ENCODE measurements at regions of chr17 and their contacts with region 1.

Region 1: GRCh38 chr17:61412143-61412859 is 12.7 kb downstream of the TBX2 start:
- DNase-seq: peak; percentile 75
- ATAC-seq: peak; percentile 44
- H3K4me3 ChIP-seq: peak overlapping the region; percentile 66
- H3K27ac ChIP-seq: peak overlapping the region; percentile 91
- H3K4me1 ChIP-seq: peaks cover 40% of the 10 kb centered on the region
- H3K27me3 ChIP-seq: no peaks in the 10 kb centered on the region
- CTCF ChIP-seq: peak; percentile 98
- POLR2A ChIP-seq: peak; percentile 63
- RAD21 ChIP-seq: peak; percentile 98

Region 2: GRCh38 chr17:61389670-61390478 is 22.4 kb before region 1 on chr17:
- CTCF ChIA-PET with region 1: no interaction called
- POLR2A ChIA-PET with region 1: no interaction called
- dilution Hi-C with region 1: no loop called
- in situ Hi-C with region 1: no loop called
- intact Hi-C with region 1: no loop called
- DNase-seq: peak; percentile 41
- ATAC-seq: peak; percentile 72
- H3K4me3 ChIP-seq: no peak overlapping the region
- H3K27ac ChIP-seq: peak overlapping the region; percentile 9; the same call in 1 of the 2 replicates
- H3K4me1 ChIP-seq: peaks cover 19% of the 10 kb centered on the region
- H3K27me3 ChIP-seq: no peaks in the 10 kb centered on the region
- CTCF ChIP-seq: peak; percentile 85
- POLR2A ChIP-seq: no peak
- RAD21 ChIP-seq: peak; percentile 89

Region 3: DNA sequence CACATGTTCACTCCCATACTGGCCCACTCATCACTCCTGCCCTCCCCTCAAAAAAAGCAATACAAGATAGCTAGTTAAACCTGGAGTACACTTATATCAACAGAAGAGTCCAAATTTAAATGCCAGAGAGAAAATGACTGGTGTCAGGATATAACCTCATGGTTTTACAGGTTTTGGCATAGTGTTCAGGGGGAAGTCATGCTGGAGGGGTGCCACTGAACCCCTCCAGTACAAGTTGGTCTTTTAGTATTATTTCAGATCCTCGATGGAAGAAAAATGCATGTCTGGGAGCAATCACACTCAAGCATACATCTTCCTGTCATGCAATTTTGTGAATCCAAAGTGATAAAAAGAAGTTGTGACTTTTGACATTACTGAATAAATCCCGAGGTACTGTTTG is 168.2 kb after region 1 on chr17:
- CTCF ChIA-PET with region 1: interaction called, 3 read pairs
- POLR2A ChIA-PET with region 1: interaction called, 14 read pairs
- dilution Hi-C with region 1: no loop called
- in situ Hi-C with region 1: no loop called
- intact Hi-C with region 1: no loop called
- DNase-seq: no peak
- ATAC-seq: no peak
- H3K4me3 ChIP-seq: no peak overlapping the region
- H3K27ac ChIP-seq: no peak overlapping the region
- H3K4me1 ChIP-seq: peaks cover 7% of the 10 kb centered on the region; the same call in 1 of the 2 replicates
- H3K27me3 ChIP-seq: no peaks in the 10 kb centered on the region; the same call in 1 of the 2 replicates
- CTCF ChIP-seq: no peak
- POLR2A ChIP-seq: no peak
- RAD21 ChIP-seq: no peak

Region 4: DNA sequence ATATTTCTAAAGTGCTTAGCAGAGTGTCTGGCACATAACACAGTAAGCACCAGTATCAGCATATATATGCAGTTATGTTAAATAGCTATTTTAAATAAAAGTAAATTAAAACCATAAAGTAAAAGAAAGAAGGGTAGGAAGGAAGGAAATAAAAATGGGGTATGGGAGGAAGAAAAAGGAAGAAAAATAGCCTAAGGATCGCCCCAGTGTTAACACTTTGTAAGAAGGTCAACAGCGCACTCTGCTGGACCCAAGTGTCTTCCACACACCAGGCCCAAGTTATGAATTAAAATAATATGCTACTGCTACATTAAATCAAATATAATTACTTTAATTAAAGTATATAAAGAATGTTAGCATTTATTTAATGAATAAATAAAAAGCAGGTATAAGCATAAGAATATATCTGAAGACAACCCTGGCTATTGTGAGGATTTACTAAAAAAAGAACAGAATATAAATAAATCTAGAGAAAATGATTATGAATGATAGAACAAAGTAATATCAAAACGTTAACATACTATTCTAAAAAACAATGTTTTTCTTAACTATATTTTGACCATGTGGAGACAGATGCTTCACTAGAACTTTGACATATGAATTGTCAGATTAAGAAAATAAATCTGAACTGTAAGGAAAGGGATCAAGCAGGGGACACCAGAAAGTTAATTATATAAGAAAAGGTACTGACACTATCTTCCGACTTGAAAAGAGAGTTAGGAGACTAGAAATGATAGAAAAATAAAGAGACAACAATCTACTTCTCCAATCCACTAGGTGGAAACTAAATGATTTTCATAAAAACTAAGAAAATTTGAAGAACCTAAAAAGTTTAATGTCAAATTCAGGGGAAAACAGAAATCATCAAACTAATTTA is 425.1 kb after region 1 on chr17:
- CTCF ChIA-PET with region 1: interaction called, 3 read pairs
- POLR2A ChIA-PET with region 1: no interaction called
- dilution Hi-C with region 1: no loop called
- in situ Hi-C with region 1: no loop called
- intact Hi-C with region 1: loop called (anchors 1 kb)
- DNase-seq: peak; percentile 81
- ATAC-seq: peak; percentile 84
- H3K4me3 ChIP-seq: no peak overlapping the region
- H3K27ac ChIP-seq: no peak overlapping the region
- H3K4me1 ChIP-seq: peaks cover 4% of the 10 kb centered on the region
- H3K27me3 ChIP-seq: no peaks in the 10 kb centered on the region
- CTCF ChIP-seq: peak; percentile 94
- POLR2A ChIP-seq: no peak
- RAD21 ChIP-seq: peak; percentile 95

Region 5: DNA sequence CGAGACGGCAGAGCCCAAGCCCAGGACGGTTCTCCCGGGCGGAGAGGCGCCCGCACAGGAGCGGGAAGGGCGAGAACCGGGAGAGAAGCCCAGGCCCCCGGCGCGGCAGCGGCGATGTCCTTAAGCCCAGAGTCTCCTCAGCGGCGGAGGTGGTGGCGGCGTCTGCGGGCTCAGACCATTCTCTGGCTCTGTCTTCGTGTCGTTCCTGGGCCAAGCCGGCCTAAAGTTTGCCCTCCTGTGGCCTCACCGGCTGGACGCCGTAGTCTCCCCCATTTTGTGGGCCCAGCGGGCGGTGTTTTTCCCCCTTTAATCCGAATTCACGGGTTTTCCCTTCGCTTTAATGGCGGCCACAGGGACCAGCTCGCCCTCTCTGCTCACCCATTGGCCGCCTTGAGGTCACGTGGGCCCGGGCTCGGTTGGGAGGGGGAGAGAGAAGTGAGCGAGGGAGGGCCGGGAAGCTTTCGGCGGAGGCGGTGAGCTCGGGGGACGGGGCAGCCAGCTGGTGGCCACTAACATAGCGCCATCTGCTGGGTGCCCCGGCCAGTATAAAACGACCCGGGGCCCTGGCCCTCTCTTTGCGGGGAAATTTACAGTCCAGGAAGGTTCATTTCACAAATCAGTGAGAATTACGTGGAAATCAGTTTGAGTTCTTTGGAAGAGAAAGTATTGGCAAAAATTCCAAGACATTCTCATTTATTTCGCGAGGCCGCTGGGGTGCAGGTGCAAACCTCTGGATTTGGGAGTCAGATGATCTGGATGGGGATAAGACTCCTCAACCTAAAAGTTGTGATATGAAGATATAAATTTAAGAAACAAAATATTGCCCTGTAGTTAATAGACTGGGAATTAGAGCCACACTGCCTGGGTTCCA is 653.5 kb after region 1 on chr17:
- CTCF ChIA-PET with region 1: no interaction called
- POLR2A ChIA-PET with region 1: no interaction called
- dilution Hi-C with region 1: no loop called
- in situ Hi-C with region 1: no loop called
- intact Hi-C with region 1: loop called (anchors 5 kb)
- DNase-seq: peak; percentile 96
- ATAC-seq: peak; percentile 95
- H3K4me3 ChIP-seq: peak overlapping the region; percentile 97
- H3K27ac ChIP-seq: peak overlapping the region; percentile 99
- H3K4me1 ChIP-seq: peaks cover 2% of the 10 kb centered on the region; the same call in 1 of the 2 replicates
- H3K27me3 ChIP-seq: no peaks in the 10 kb centered on the region
- CTCF ChIP-seq: peak; percentile 97
- POLR2A ChIP-seq: peak; percentile 83
- RAD21 ChIP-seq: peak; percentile 66

Measured in IMR-90 (cell line).